Activated B cell treated with CpG ODN at 0.5 μM for 24 hours (primary cell): ENCODE measurements at regions of chr5 and their contacts with region 1.

Region 1: GRCh38 chr5:159106569-159107282 is 7.0 kb upstream of the EBF1 start:
- DNase-seq: peak; percentile 79
- ATAC-seq: peak; percentile 71
- H3K4me3 Mint-ChIP-seq: peak overlapping the region; percentile 86
- H3K27ac Mint-ChIP-seq: peak overlapping the region; percentile 95
- H3K4me1 Mint-ChIP-seq: peaks cover 53% of the 10 kb centered on the region
- H3K27me3 Mint-ChIP-seq: no peaks in the 10 kb centered on the region
- CTCF ChIP-seq: peak; percentile 69

Region 2: GRCh38 chr5:158074992-158075769 is 1031.5 kb before region 1 on chr5:
- CTCF ChIA-PET with region 1: interaction called, 80 read pairs
- POLR2A ChIA-PET with region 1: interaction called, 13 read pairs
- intact Hi-C with region 1: loop called (anchors 1 kb)
- DNase-seq: peak; percentile 48
- ATAC-seq: peak; percentile 95
- H3K4me3 Mint-ChIP-seq: peak overlapping the region; percentile 42
- H3K27ac Mint-ChIP-seq: peak overlapping the region; percentile 73
- H3K4me1 Mint-ChIP-seq: peaks cover 20% of the 10 kb centered on the region
- H3K27me3 Mint-ChIP-seq: peaks cover 2% of the 10 kb centered on the region
- CTCF ChIP-seq: no peak

Region 3: GRCh38 chr5:158435161-158435616 is 671.5 kb before region 1 on chr5:
- CTCF ChIA-PET with region 1: interaction called, 3 read pairs
- POLR2A ChIA-PET with region 1: interaction called, 3 read pairs
- intact Hi-C with region 1: loop called (anchors 10 kb)
- DNase-seq: no peak
- ATAC-seq: peak; percentile 49
- H3K4me3 Mint-ChIP-seq: peak overlapping the region; percentile 50
- H3K27ac Mint-ChIP-seq: peak overlapping the region; percentile 33
- H3K4me1 Mint-ChIP-seq: peaks cover 72% of the 10 kb centered on the region
- H3K27me3 Mint-ChIP-seq: no peaks in the 10 kb centered on the region
- CTCF ChIP-seq: no peak

Region 4: DNA sequence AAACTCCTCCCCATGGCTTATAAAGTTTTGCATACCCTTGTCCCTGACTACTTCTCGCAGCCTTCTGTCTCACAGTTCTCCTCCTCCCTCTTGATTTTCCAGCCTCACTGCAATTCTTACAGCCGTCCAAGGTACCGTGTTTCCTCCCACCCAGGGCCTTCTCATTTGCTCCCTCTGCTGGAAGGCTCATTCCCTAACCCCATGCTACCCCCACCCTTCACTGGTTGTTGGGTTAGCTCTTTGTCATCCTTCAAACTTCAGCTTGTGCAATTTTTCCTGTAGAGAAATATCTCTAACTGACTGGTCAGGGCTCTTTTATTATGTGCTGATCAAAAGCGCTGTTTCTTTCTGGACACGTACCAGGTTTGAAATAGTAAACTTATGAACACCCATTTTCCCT is 336.2 kb before region 1 on chr5:
- CTCF ChIA-PET with region 1: interaction called, 10 read pairs
- POLR2A ChIA-PET with region 1: interaction called, 18 read pairs
- intact Hi-C with region 1: loop called (anchors 2 kb)
- DNase-seq: no peak
- ATAC-seq: no peak
- H3K4me3 Mint-ChIP-seq: peak overlapping the region; percentile 16
- H3K27ac Mint-ChIP-seq: peak overlapping the region; percentile 59
- H3K4me1 Mint-ChIP-seq: peaks cover 91% of the 10 kb centered on the region
- H3K27me3 Mint-ChIP-seq: no peaks in the 10 kb centered on the region
- CTCF ChIP-seq: no peak

Region 5: DNA sequence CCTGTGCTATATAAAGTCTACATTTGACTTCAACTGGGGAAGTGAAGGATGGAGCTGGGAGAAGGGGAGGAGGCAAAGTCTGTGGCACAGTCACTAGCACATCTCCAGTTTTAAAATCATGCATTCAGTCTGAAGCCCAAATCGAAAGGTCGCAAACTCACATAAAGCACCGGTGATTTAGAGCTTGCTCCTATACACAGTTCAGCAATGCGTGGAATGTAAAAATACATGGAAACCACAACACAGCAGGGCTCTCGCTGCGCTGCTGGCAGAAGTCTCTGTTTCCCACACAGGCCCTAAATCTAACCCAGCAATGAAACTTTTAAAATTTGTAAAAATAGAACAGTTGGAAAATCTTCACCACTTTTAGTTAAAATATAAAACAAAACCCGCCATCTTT is 75.2 kb before region 1 on chr5:
- CTCF ChIA-PET with region 1: no interaction called
- POLR2A ChIA-PET with region 1: no interaction called
- intact Hi-C with region 1: no loop called
- DNase-seq: no peak
- ATAC-seq: peak; percentile 57
- H3K4me3 Mint-ChIP-seq: peak overlapping the region; percentile 70
- H3K27ac Mint-ChIP-seq: peak overlapping the region; percentile 73
- H3K4me1 Mint-ChIP-seq: peaks cover 85% of the 10 kb centered on the region
- H3K27me3 Mint-ChIP-seq: no peaks in the 10 kb centered on the region
- CTCF ChIP-seq: no peak

Region 6: GRCh38 chr5:159049844-159050315 is 56.8 kb before region 1 on chr5:
- CTCF ChIA-PET with region 1: interaction called, 7 read pairs
- POLR2A ChIA-PET with region 1: interaction called, 136 read pairs
- intact Hi-C with region 1: no loop called
- DNase-seq: no peak
- ATAC-seq: no peak
- H3K4me3 Mint-ChIP-seq: peak overlapping the region; percentile 76
- H3K27ac Mint-ChIP-seq: peak overlapping the region; percentile 93
- H3K4me1 Mint-ChIP-seq: peaks cover 97% of the 10 kb centered on the region
- H3K27me3 Mint-ChIP-seq: no peaks in the 10 kb centered on the region
- CTCF ChIP-seq: no peak